ENCODE measurements at regions of chr6 and their contacts with region 1.

Region 1: GRCh38 chr6:112029045-112029822 is 24.7 kb upstream of the CCN6 start:
- DNase-seq: no peak
- H3K4me3 ChIP-seq: no peak overlapping the region
- CTCF ChIP-seq: peak; percentile 61

Region 2: DNA sequence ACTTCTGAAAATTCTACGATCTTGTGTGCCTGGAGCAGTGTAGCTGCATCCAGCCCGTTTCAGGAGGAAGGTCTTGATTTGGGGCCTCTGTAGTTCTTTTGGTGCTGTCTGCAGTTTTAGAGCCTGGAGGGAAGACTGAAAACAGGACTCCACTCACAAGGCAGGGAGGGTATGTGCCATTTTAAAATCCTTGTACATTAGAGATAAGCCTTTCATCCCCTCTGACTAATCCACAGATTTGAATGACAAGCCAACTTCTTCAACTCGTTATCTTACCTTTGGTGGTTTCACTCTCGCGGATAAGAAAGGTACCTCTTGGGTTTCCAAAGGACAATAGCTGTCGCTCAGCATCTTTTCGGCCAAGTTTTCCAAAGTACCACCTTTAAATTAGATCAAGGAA is 325.5 kb before region 1 on chr6:
- CTCF ChIA-PET with region 1: interaction called, 39 read pairs
- POLR2A ChIA-PET with region 1: no interaction called
- DNase-seq: no peak
- H3K4me3 ChIP-seq: no peak overlapping the region
- CTCF ChIP-seq: no peak

Region 3: GRCh38 chr6:111912904-111913303 is 116.3 kb before region 1 on chr6:
- CTCF ChIA-PET with region 1: no interaction called
- POLR2A ChIA-PET with region 1: no interaction called
- DNase-seq: no peak
- H3K4me3 ChIP-seq: no peak overlapping the region
- CTCF ChIP-seq: no peak

Region 4: DNA sequence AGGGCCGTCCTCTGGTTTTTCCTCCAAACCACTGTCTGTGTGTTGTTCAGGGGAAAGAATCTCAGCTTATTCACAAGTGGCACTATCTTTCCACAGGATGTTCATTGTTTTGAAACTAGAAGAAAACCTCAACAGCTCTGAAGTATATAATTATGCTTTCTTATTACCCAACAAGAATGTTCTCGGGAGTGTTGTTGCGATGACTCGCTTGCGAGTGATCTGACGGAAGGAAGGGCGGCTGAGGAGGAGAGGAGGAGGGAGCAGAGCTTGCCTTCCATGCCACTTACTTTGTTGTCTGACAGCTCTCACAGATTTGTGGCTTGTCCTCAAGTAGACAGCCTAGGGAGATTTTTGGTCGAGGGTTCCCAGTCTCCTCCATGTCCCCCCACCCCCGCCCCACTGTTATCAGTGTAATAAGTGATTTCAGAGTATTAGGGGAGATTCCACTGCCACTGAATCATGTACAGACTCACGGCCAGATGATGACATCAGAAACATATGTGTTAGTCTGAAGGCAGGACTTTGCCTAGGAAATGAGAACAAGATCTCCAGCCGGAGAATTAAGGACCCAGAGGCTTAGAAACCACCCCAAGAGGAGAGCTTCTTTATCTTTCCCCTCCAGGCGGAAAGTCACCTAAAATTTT is 56.0 kb before region 1 on chr6:
- CTCF ChIA-PET with region 1: no interaction called
- POLR2A ChIA-PET with region 1: no interaction called
- DNase-seq: peak; percentile 92
- H3K4me3 ChIP-seq: peak overlapping the region; percentile 36
- CTCF ChIP-seq: no peak

Region 5: DNA sequence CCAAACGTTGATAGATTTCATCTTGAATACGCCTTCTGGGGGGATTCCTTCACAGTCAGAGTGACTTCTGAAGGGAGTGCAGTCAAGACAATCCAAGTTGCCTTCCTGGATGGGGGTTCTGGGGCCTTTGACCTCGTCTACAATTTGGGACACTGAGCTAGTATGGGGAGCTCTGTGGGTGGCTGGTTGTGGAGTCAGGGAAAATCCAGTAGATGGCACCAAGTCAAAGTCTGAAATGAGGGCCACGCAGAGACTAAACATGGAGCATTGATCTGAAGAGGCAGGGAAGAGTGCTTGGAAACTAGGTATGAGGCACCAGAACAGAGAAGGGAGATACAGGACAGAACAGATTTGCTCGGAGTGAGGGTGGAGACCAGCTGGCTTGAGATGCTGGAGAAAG is 18.9 kb before region 1 on chr6:
- CTCF ChIA-PET with region 1: interaction called, 23 read pairs
- POLR2A ChIA-PET with region 1: no interaction called
- DNase-seq: no peak
- H3K4me3 ChIP-seq: no peak overlapping the region
- CTCF ChIP-seq: no peak

Region 6: GRCh38 chr6:112018619-112019416 is 10.4 kb before region 1 on chr6:
- CTCF ChIA-PET with region 1: interaction called, 59 read pairs
- POLR2A ChIA-PET with region 1: no interaction called
- DNase-seq: no peak
- H3K4me3 ChIP-seq: no peak overlapping the region
- CTCF ChIP-seq: no peak

Measured in AG04449 (cell line).